ENCODE measurements at regions of chr1 and their contacts with region 1.

Region 1: DNA sequence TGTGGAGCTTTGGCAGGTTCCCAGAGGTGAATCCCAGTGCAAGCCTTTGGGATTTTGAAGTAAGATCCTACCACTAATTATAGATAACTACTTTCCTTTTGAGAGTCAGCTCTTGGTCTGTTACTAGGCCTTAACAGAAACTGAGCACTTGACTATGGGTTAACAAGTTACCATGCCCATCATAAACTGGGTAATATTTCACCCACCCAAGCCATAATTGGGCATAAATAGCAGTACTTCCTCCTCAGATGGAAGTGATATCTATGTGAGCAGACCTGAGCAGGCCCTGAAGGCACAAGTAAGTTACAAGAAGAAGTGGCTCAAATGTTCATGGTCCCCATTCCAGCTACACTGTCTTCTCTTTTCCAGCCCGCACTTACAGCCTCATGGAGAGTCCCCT is 475.9 kb downstream of the LRRIQ3 start:
- DNase-seq: no peak
- H3K4me3 ChIP-seq: no peak overlapping the region
- H3K27ac ChIP-seq: no peak overlapping the region
- H3K4me1 ChIP-seq: no peaks in the 10 kb centered on the region
- H3K27me3 ChIP-seq: no peaks in the 10 kb centered on the region
- CTCF ChIP-seq: no peak
- POLR2A ChIP-seq: no peak

Region 2: GRCh38 chr1:73065339-73066041 is 656.6 kb before region 1 on chr1:
- intact Hi-C with region 1: loop called (anchors 5 kb)
- DNase-seq: no peak
- H3K4me3 ChIP-seq: no peak overlapping the region
- H3K27ac ChIP-seq: no peak overlapping the region
- H3K4me1 ChIP-seq: no peaks in the 10 kb centered on the region
- H3K27me3 ChIP-seq: no peaks in the 10 kb centered on the region
- CTCF ChIP-seq: no peak
- POLR2A ChIP-seq: no peak

Measured in breast epithelium (tissue), 4 donors.